ENCODE measurements at regions of chrX and their contacts with region 1.

Region 1: DNA sequence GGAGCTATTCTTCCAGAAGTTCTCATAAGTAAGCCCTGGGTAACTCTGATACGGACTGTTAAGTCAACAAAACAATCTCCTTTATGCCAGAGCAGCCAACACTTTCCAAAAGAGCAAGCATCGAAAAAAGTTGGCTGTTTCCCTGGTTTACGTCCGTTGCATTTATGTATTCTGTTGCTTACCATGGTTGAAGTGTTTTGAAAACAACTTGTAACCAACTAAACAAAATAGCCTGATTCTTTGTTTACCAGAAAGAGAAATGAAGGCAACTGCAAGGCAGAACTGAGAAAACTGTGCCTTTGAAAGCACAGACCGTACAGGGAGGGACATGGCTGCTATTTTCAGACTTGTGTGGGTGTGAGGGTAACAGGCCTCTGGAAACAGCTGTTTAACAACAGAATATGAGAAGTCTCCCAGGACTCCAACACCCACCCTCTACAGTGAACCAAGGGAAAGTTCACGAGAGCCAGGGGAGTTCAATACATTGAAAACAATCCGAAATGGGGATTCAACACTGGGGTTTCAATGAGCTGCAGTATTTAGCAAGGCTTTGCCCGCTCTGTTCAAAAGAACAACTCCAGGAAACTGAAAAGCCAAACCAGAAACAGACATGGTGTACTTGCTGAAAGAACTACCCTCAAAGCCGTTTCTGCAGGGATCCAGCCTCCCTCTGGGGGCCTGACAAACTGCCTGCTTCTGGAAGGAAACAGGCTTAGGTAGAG is 95.8 kb upstream of the EGFL6 start:
- DNase-seq: peak; percentile 8
- H3K4me3 Mint-ChIP-seq: peak overlapping the region; percentile 59
- H3K27ac Mint-ChIP-seq: peak overlapping the region; percentile 84
- H3K4me1 Mint-ChIP-seq: peaks cover 26% of the 10 kb centered on the region
- H3K27me3 Mint-ChIP-seq: no peaks in the 10 kb centered on the region

Region 2: DNA sequence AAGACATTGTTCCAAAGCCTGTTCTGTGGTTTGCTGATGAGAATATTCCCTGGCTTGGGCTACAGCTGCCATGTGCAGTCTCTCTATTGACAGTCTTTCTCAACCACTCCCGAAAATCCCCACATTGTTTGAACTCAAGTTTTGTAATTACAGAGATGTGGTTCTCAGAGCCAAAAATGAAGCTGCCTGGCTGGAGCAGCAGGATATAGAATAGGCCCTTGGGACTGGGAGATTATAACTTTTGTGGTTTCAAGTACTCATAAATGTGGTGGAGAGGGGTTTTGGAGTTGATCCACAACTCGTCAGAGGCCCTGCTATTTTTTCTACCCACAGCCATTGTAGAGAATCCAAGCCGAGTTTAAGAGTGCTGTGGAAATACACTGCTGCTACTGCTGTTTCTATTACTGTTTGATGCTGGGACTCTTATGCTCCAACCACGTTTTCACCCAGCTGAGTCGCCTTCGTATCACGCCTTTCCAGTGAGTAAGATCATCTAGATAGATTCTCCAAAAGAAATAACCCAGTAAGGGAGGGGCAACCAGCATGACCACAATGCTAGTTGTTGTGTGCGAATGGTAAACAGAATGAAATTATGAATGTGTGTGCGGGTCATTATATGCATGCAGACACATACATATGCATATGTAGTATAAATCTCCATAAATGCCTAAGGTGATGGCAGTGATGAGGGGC is 96.6 kb before region 1 on chrX:
- CTCF ChIA-PET with region 1: no interaction called
- intact Hi-C with region 1: loop called (anchors 5 kb)
- DNase-seq: peak; percentile 24
- H3K4me3 Mint-ChIP-seq: no peak overlapping the region
- H3K27ac Mint-ChIP-seq: no peak overlapping the region
- H3K4me1 Mint-ChIP-seq: peaks cover 25% of the 10 kb centered on the region
- H3K27me3 Mint-ChIP-seq: no peaks in the 10 kb centered on the region

Region 3: DNA sequence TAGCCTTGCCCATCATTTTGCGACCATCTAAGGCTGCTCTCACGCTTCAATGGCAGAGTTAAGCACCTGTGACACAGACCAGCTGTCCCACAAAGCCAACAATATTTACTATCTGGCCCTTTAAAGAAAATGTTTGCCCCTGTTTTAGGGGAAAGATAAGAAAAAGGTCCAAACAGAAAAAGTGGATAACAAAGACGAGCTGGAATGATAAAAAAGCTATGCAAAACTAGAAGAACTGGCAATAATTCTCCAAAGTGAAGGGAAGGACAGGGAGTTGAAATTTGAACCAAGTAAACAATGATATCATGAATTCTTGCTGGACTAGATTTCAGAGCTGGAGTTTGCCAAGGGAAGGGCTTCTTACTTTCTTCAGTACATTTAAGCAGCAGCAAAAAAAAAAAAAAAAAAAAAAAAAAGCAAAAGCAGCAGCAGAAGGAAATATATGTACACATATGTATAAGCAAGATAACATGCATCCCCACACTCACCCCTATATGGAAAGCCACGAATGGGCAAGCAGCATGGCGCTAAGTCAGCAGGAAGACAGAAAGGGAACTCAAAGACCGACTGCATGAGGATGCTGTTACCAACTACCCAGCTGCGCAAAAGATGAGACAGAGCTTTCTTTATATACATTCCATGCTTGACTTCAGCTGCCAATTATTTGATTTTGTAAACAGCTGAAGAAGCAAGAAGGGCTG is 248.4 kb after region 1 on chrX:
- CTCF ChIA-PET with region 1: no interaction called
- intact Hi-C with region 1: no loop called
- DNase-seq: no peak
- H3K4me3 Mint-ChIP-seq: no peak overlapping the region
- H3K27ac Mint-ChIP-seq: no peak overlapping the region
- H3K4me1 Mint-ChIP-seq: peaks cover 44% of the 10 kb centered on the region
- H3K27me3 Mint-ChIP-seq: no peaks in the 10 kb centered on the region